ENCODE measurements at regions of chr21 and their contacts with region 1.

Region 1: GRCh38 chr21:15241997-15242736 is 177.4 kb upstream of the NRIP1 start:
- DNase-seq: peak; percentile 37
- H3K4me3 ChIP-seq: no peak overlapping the region
- H3K27ac ChIP-seq: no peak overlapping the region
- H3K4me1 ChIP-seq: peaks cover 27% of the 10 kb centered on the region
- H3K27me3 ChIP-seq: no peaks in the 10 kb centered on the region
- CTCF ChIP-seq: peak in 1 of 2 donors; percentile 39

Region 2: DNA sequence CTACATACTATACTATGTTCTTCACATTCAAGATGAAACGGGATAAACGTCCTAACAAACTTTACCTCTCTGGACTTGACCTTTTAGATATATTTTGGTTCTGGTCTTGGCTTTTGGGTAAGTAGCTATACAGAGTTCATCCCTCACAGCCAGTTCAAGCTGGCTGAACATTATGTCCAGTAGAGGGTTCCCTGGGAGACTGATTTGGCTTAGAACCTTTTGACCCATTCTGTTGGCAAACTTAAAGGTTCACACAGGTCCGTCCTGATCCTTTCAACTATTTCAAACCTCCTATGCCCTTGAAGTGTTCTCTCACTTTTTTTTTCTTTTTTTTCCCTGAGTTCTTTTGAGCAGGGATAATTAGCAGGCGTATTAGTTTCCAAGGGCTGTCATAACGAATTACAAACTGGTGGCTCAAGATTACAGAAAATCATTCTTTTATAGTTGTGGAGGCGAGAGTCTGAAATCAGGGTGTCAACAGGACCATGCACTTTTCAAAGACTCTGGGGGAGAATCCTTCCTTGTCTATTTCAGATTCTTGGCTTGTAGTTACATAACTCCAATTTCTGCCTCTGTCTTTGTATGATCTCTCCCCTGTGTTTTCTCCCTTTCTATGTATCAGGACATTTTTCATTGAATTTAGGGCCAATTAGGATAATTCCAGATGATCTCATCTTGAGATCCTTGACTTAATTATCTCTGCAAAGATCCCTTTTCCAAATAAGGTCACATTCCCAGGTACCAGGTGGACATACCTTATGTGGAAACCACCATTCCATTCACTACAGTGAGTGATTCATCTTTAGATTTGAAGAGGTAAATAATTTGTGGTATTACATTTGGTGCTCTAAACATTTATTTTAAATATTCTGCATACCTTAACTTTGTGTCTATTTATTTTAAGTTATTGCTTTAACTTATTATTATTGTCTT is 230.2 kb after region 1 on chr21:
- CTCF ChIA-PET with region 1: no interaction called
- dilution Hi-C with region 1: no loop called
- in situ Hi-C with region 1: loop called in 1 of 2 experiments (anchors 10 kb)
- intact Hi-C with region 1: no loop called
- DNase-seq: peak; percentile 53
- H3K4me3 ChIP-seq: no peak overlapping the region
- H3K27ac ChIP-seq: no peak overlapping the region
- H3K4me1 ChIP-seq: no peaks in the 10 kb centered on the region
- H3K27me3 ChIP-seq: no peaks in the 10 kb centered on the region
- CTCF ChIP-seq: no peak

Region 3: DNA sequence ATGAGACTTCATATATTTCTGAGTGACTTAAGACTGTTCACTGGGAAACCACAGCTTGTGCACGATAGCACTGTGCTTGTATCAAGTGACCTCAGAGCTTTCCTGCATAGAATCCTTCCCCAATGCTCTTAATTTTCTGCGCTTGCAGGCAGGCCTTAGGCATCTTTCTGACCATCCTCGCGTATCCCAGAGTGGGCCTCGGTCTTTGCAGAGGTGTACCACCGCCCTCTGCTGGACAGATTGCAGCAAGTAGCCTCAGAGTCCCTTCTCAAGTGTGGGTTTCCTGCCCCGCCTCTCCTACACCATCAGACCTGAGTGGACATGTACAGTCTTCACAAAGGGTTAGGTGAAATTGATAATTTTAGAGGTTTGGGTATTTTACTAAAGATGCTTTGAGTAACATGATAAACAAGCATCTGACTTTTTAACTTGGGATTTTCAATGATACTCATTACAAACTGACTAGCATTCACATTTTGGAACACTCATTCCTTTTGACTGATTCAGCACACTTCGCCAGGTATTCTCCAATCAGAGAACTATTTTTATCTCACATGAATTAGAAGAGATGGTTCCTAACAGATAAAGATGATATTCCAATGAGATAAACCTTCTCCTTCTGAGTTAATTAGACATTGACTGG is 241.1 kb after region 1 on chr21:
- CTCF ChIA-PET with region 1: no interaction called
- dilution Hi-C with region 1: no loop called
- in situ Hi-C with region 1: loop called (anchors 10 kb)
- intact Hi-C with region 1: loop called (anchors 1 kb)
- DNase-seq: peak; percentile 78
- H3K4me3 ChIP-seq: no peak overlapping the region
- H3K27ac ChIP-seq: no peak overlapping the region
- H3K4me1 ChIP-seq: peaks cover 4% of the 10 kb centered on the region
- H3K27me3 ChIP-seq: no peaks in the 10 kb centered on the region
- CTCF ChIP-seq: peak; percentile 90

Region 4: GRCh38 chr21:15552914-15553494 is 310.8 kb after region 1 on chr21:
- CTCF ChIA-PET with region 1: no interaction called
- dilution Hi-C with region 1: no loop called
- in situ Hi-C with region 1: no loop called
- intact Hi-C with region 1: loop called (anchors 1 kb)
- DNase-seq: peak; percentile 38
- H3K4me3 ChIP-seq: no peak overlapping the region
- H3K27ac ChIP-seq: no peak overlapping the region
- H3K4me1 ChIP-seq: no peaks in the 10 kb centered on the region
- H3K27me3 ChIP-seq: no peaks in the 10 kb centered on the region
- CTCF ChIP-seq: peak; percentile 56 to 72

Measured in mammary epithelial cell (primary cell).